Activated T-helper 1 cell treated with anti-CD3 and anti-CD28 coated beads, Interleukin-12 subunit alpha, Interleukin-12 subunit beta, Interleukin-2, Interleukin-4 antibody, amounts not matched to agents 30 ng/mL and 10 ng/mL and 1 ng/mL, durations not matched to agents 14 hours and 24 hours and 36 hours (primary cell): ENCODE measurements at regions of chr10 and their contacts with region 1.

Region 1: GRCh38 chr10:38010119-38010903 is at the start of gene ZNF33A:
- DNase-seq: peak; percentile 85
- H3K4me3 Mint-ChIP-seq: peak within 1 kb of the TSS; percentile 84
- H3K27ac Mint-ChIP-seq: peak within 1 kb of the TSS; percentile 91
- H3K4me1 Mint-ChIP-seq: peaks cover 38% of the 10 kb centered on the region
- H3K27me3 Mint-ChIP-seq: no peaks in the 10 kb centered on the region
- total RNA-seq, gene ZNF33A: 15.5 and 17.2 TPM in 2 replicates

Region 2: DNA sequence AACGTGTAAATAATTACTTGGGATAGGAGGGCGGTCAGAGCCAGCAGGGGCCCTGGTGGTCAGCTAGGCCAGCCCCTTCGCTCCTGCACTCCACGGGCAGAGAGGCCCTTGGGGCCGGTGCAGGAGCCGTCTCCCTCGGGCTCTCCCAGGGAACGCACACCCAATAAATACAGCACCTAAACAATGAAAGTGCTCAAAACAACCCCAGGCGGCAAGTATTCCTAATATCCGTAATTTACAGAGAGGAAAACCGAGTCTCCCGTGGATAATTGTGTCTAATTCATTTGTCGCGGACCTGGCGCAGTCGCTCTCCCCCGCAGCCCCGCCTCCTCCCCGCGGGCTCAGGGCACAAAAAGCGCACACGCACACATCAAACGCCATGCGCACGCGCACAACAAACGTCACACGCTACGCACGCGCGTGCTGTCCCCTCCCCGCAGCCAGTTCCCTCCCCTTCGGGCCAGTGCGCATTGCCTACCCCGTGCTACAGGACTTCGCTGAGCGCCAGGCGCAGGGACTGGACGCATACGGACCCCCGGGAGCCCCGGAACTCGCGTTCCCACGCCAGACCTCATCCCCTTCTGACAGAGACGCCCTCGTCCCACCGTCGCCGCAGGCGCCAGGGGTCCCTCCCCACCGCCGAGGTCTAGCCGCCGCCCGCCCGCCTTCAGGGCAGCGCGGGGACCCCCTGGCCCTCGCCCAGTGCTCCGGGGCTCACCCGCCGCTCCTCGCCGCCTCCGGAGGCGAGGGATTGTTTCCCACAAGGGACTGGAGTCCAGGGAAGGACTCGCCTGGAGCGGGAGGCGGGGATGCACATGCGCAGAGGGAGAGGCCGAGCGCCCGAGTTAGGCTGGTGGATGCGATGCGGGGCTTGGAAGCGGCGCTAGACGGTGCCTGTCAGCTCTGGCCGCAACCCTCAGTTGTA is 152.8 kb before region 1 on chr10 and contains the start of gene ZNF248:
- intact Hi-C with region 1: loop called (anchors 1 kb)
- DNase-seq: peak; percentile 94
- H3K4me3 Mint-ChIP-seq: peak within 1 kb of the TSS; percentile 89
- H3K27ac Mint-ChIP-seq: peak within 1 kb of the TSS; percentile 95
- H3K4me1 Mint-ChIP-seq: peaks cover 30% of the 10 kb centered on the region
- H3K27me3 Mint-ChIP-seq: no peaks in the 10 kb centered on the region
- total RNA-seq, gene ZNF248: 7.7 and 7.9 TPM in 2 replicates

Region 3: GRCh38 chr10:37976091-37976879 is 34.0 kb before region 1 on chr10 and contains the start of gene ZNF25:
- intact Hi-C with region 1: loop called (anchors 1 kb)
- DNase-seq: peak; percentile 95
- H3K4me3 Mint-ChIP-seq: peak within 1 kb of the TSS; percentile 91
- H3K27ac Mint-ChIP-seq: peak within 1 kb of the TSS; percentile 95
- H3K4me1 Mint-ChIP-seq: peaks cover 31% of the 10 kb centered on the region
- H3K27me3 Mint-ChIP-seq: no peaks in the 10 kb centered on the region
- total RNA-seq, gene ZNF25: 6.4 and 8.1 TPM in 2 replicates

Region 4: DNA sequence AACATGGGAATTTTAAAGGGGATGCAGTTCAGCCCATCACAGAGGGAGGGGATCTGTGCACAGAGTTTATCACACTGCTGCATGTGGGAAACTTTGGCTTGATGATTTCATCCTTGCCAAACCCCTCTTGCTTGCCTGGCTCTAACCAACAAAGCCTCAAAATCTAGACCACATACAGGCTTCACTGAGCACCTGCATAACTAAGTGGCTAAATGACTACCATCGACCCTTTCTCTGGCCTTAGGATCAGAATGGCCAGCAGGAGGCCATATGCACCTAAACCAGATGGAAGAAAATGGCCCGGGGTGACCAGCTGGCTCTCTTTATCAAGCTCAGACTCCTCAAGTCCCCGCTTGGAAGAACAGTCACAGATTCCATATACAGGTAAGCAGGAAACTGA is 18.2 kb before region 1 on chr10:
- intact Hi-C with region 1: no loop called
- DNase-seq: no peak
- H3K4me3 Mint-ChIP-seq: no peak overlapping the region
- H3K27ac Mint-ChIP-seq: no peak overlapping the region
- H3K4me1 Mint-ChIP-seq: no peaks in the 10 kb centered on the region
- H3K27me3 Mint-ChIP-seq: peaks cover 2% of the 10 kb centered on the region

Region 5: DNA sequence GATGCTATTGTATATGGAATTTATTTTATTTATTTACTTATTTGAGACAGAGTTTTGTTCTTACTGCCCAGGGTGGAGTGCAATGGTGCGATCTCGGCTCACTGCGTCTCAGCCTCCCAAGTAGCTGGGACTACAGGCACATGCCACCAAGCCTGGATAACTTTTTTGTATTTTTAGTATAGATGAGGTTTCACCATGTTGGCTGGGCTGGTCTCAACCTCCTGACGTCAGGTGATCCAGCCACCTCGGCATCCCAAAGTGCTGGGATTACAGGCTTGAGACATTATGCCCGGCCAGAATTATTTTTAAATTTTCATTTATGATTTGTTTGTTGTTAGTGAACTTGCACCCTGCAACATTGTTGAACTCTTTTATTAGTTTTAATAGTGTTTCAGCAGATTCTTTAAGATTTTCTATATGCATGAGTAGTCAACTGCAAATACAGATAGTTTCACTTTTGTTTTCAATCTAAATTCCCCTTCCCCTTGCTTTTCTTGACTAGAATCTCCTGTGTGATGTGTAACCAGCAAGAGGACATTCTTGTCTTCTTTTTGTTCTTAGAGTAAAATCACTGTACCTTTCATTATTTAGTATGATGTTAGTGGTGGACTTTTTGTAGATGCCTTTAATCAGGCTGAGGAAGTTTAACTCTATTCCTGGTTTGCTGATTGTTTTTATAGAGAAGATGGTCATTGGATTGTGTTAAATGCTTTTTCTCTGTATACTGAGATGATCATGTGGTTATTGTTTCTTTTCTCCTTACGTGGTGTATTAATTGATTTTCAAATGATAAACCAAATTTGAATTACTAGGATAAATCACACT is 28.0 kb after region 1 on chr10:
- intact Hi-C with region 1: loop called (anchors 1 kb)
- DNase-seq: no peak
- H3K4me3 Mint-ChIP-seq: peak overlapping the region; percentile 86
- H3K27ac Mint-ChIP-seq: peak overlapping the region; percentile 91
- H3K4me1 Mint-ChIP-seq: peaks cover 20% of the 10 kb centered on the region
- H3K27me3 Mint-ChIP-seq: no peaks in the 10 kb centered on the region